PC-3 (cell line): ENCODE measurements at regions of chr4 and their contacts with region 1.

Region 1: GRCh38 chr4:76689241-76689817 is 208.6 kb downstream of the SOWAHB start:
- DNase-seq: peak; percentile 65
- ATAC-seq: peak; percentile 54
- H3K4me3 ChIP-seq: peak overlapping the region; percentile 85
- H3K27ac ChIP-seq: peak overlapping the region; percentile 71
- H3K4me1 ChIP-seq: peaks cover 41% of the 10 kb centered on the region
- H3K27me3 ChIP-seq: no peaks in the 10 kb centered on the region
- CTCF ChIP-seq: no peak

Region 2: GRCh38 chr4:76585897-76586360 is 103.4 kb before region 1 on chr4:
- CTCF ChIA-PET with region 1: no interaction called
- POLR2A ChIA-PET with region 1: no interaction called
- intact Hi-C with region 1: loop called (anchors 5 kb)
- DNase-seq: peak; percentile 89
- ATAC-seq: peak; percentile 96
- H3K4me3 ChIP-seq: peak overlapping the region; percentile 76
- H3K27ac ChIP-seq: peak overlapping the region; percentile 45
- H3K4me1 ChIP-seq: peaks cover 38% of the 10 kb centered on the region
- H3K27me3 ChIP-seq: no peaks in the 10 kb centered on the region
- CTCF ChIP-seq: 0 out of 2 replicates have a peak, but pooled peaks have one; percentile 18

Region 3: GRCh38 chr4:76665139-76665538 is 24.2 kb before region 1 on chr4:
- CTCF ChIA-PET with region 1: no interaction called
- POLR2A ChIA-PET with region 1: interaction called, 6 read pairs
- intact Hi-C with region 1: loop called (anchors 2 kb)
- DNase-seq: peak; percentile 97
- ATAC-seq: peak; percentile 90
- H3K4me3 ChIP-seq: no peak overlapping the region
- H3K27ac ChIP-seq: peak overlapping the region; percentile 87
- H3K4me1 ChIP-seq: peaks cover 42% of the 10 kb centered on the region
- H3K27me3 ChIP-seq: no peaks in the 10 kb centered on the region
- CTCF ChIP-seq: no peak

Region 4: DNA sequence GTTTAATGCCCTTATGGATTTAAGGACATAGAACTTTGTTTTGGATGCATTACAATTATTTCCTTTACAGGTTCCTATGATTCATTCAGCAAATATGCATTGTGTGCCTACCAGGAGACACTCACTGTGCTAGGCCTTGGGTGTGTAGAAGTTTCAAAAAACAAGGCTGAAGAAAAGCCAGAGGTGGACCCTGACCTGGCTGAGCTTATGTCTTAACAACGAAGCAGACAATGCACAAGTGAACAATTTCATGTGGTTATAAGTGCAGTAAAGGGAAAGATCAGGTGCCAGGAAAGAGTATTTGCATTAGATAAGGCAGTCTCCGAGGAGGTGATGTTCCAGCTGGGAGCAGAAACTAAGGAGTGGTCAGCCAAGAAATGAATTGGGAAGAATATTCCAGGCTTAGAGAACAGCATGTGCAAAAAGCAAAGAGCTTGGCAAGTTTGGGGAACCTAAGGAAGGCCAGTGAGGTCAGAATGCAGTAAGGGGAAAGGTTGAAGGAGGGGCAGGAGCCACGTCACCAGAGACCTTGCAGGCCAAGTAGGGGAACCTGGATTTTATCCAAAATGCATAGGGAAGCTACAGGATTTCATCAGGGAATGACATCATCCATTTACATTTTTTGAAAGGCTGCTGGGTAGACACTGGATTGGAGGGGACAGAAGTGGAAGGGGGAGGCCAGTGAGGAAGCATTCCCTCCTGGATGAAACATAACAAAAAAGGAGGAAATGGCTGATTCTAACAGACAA is 15.0 kb after region 1 on chr4:
- CTCF ChIA-PET with region 1: no interaction called
- POLR2A ChIA-PET with region 1: interaction called, 4 read pairs
- intact Hi-C with region 1: loop called (anchors 1 kb)
- DNase-seq: peak; percentile 88
- ATAC-seq: peak; percentile 81
- H3K4me3 ChIP-seq: peak overlapping the region; percentile 44; the same call in 1 of the 2 replicates
- H3K27ac ChIP-seq: peak overlapping the region; percentile 99
- H3K4me1 ChIP-seq: peaks cover 61% of the 10 kb centered on the region
- H3K27me3 ChIP-seq: no peaks in the 10 kb centered on the region
- CTCF ChIP-seq: no peak

Region 5: GRCh38 chr4:76733068-76733771 is 43.9 kb after region 1 on chr4:
- CTCF ChIA-PET with region 1: no interaction called
- POLR2A ChIA-PET with region 1: interaction called, 5 read pairs
- intact Hi-C with region 1: loop called (anchors 5 kb)
- DNase-seq: peak; percentile 70
- ATAC-seq: peak; percentile 78
- H3K4me3 ChIP-seq: no peak overlapping the region
- H3K27ac ChIP-seq: no peak overlapping the region; the same call in 1 of the 2 replicates
- H3K4me1 ChIP-seq: peaks cover 6% of the 10 kb centered on the region; the same call in 1 of the 2 replicates
- H3K27me3 ChIP-seq: no peaks in the 10 kb centered on the region
- CTCF ChIP-seq: peak; percentile 80